GM10248 (cell line): ENCODE measurements at regions of chr3 and their contacts with region 1.

Region 1: GRCh38 chr3:42557849-42558248 is 23.9 kb downstream of the SEC22C start:
- DNase-seq: no peak
- CTCF ChIP-seq: peak; percentile 14

Region 2: GRCh38 chr3:42486814-42487565 is 70.9 kb before region 1 on chr3:
- CTCF ChIA-PET with region 1: no interaction called
- POLR2A ChIA-PET with region 1: no interaction called
- DNase-seq: no peak
- CTCF ChIP-seq: no peak

Region 3: DNA sequence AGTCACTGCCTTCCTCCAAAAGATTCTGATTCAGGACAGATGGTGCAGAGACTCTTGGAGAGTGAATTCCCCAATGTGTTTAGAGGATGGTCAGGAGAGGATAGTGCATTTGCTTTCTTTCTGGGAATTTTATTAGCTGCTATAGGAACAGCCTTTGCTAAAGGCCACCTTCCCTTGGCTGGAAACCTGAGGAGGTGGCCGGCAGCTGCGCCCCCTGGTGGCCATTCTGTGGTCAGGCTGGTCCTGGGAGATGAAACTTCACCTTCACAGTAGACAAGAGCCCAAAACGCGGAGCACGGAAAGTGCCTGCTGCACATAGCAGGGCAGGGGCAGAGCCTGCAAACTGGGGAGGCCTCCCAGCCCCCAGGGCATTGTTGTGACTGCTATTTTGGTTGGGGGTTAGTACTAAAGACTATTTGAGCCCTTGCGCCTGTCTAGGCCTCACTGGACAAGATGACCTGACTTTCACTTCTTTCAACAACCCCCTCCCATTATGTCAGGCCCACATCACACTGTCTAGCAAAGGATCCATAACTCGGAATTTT is 10.4 kb before region 1 on chr3:
- CTCF ChIA-PET with region 1: interaction called, 49 read pairs
- POLR2A ChIA-PET with region 1: no interaction called
- DNase-seq: peak; percentile 75
- CTCF ChIP-seq: peak; percentile 91